ENCODE measurements at regions of chr6 and their contacts with region 1.

Region 1: GRCh38 chr6:37303932-37304363 is 46.0 kb upstream of the TMEM217 start:
- DNase-seq: peak; percentile 50
- H3K4me3 ChIP-seq: no peak overlapping the region
- H3K27ac ChIP-seq: no peak overlapping the region
- H3K4me1 ChIP-seq: peaks cover 2 to 9% of the 10 kb centered on the region in 2 experiments; a peak in 3 of 4 replicates
- H3K27me3 ChIP-seq: no peaks in the 10 kb centered on the region
- CTCF ChIP-seq: peak; percentile 73
- EP300 ChIP-seq: no peak
- RAD21 ChIP-seq: peak; percentile 63

Region 2: DNA sequence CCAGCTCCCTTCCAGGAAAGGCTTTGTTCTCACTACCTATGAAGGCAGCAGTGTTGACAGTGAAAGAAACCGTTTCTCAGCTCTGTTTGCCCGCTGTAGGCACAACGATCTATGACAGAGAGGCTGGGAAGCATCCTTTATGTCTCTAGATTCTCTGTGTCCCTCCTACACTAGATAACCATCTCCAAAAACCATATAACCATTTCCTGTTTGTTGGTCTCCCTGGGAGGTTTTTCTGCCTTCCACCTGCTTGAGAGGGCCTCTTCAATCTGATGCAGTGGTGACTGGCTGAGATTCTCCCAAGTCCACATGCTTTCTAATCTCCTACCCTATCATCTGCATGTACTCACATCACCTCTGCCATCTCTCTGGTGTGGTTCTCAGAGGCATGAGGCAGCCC is 14.0 kb before region 1 on chr6:
- CTCF ChIA-PET with region 1: interaction called, 13 read pairs
- POLR2A ChIA-PET with region 1: no interaction called
- DNase-seq: no peak
- H3K4me3 ChIP-seq: no peak overlapping the region
- H3K27ac ChIP-seq: no peak overlapping the region
- H3K4me1 ChIP-seq: peaks cover 0 to 3% of the 10 kb centered on the region in 2 experiments; a peak in 1 of 4 replicates
- H3K27me3 ChIP-seq: no peaks in the 10 kb centered on the region
- CTCF ChIP-seq: no peak
- EP300 ChIP-seq: no peak
- RAD21 ChIP-seq: no peak

Region 3: DNA sequence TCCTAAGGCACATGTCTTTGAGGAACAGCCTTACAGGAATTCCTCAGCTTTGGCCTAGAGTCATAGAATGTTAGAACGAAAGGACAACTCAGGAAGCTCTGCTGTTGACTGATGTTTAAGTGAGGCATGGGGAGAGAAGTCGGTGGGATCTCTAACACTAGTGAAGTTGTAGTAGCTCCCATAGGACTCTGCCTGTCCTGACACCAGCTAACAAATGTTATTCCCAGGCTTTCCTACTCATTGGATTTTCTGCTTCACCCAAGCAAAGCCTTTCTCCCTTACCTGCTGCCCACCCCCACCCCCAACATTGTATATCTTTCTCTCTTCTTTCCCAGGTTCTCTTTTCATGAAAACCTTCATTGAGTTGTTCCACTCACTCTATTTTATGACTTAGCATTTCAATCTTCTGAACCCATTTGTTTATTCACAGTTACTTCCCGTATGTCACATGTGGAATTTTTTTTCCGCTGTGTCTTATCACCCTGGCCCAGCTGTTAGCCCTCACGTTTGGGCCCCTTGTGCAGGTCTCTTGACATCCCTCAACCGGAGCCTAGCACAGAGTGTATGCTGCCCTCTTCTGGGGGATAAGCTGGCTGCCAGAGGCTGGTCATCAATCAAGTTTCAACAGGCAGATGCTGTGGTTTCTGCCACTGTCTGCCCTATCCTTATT is 10.7 kb after region 1 on chr6:
- CTCF ChIA-PET with region 1: interaction called, 43 read pairs
- POLR2A ChIA-PET with region 1: no interaction called
- DNase-seq: peak; percentile 29
- H3K4me3 ChIP-seq: no peak overlapping the region
- H3K27ac ChIP-seq: no peak overlapping the region
- H3K4me1 ChIP-seq: peaks cover 11 to 12% of the 10 kb centered on the region in 2 experiments; a peak in 3 of 4 replicates
- H3K27me3 ChIP-seq: no peaks in the 10 kb centered on the region
- CTCF ChIP-seq: peak; percentile 58
- EP300 ChIP-seq: no peak
- RAD21 ChIP-seq: peak; percentile 50

Region 4: DNA sequence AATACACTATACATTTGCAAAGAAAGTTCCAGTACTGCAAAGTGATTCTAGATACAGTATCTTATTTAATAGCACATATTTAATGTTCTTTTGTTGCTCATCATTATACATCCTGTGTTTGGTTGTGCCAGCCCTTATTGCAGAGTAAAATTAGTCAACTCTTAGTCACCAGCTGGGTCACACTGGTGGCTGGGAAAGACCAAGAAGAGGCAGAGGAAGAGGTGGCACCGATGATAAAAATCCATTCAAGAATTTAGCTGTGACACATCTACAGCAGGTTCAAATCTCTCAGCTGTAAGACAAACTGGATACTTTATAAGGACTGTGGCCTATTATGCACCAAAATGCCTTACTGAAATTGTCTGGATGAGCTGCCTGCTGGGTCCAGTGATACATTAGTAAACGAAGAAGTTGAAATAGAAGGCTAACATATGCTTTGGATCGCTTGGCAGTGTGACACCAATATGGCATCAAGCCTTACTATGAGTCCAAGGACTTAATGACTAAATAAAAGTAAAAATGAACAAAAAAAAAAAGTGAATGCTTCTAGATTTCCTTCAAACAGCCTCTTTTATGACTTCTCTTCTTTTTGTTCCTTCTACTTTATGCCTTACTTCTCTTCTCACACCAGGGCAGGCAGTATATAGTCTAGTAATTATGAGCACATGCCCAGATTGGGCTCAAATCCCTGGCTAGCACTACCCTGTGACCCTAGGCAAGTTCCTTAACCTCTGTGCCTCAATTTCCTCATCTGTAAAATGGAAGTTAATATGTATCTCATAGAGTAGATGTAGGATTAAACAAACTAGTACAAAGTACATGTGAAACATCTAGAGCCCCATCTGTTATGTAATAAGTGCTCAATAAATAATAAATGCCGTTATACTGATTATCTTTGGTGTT is 20.4 kb after region 1 on chr6:
- CTCF ChIA-PET with region 1: interaction called, 14 read pairs
- POLR2A ChIA-PET with region 1: no interaction called
- DNase-seq: no peak
- H3K4me3 ChIP-seq: no peak overlapping the region
- H3K27ac ChIP-seq: peak overlapping the region in 1 of 2 experiments; percentile 65; a peak in 2 of 4 replicates
- H3K4me1 ChIP-seq: peaks cover 13 to 14% of the 10 kb centered on the region in 2 experiments; a peak in 3 of 4 replicates
- H3K27me3 ChIP-seq: no peaks in the 10 kb centered on the region
- CTCF ChIP-seq: no peak
- EP300 ChIP-seq: no peak
- RAD21 ChIP-seq: no peak

Measured in SK-N-SH (cell line).